Endothelial cell of umbilical vein (primary cell): ENCODE measurements at regions of chr12 and their contacts with region 1.

Region 1: GRCh38 chr12:69608114-69608513 is 2.6 kb downstream of the LRRC10 start:
- DNase-seq: no peak
- H3K4me3 ChIP-seq: no peak overlapping the region
- H3K27ac ChIP-seq: no peak overlapping the region
- H3K4me1 ChIP-seq: peaks cover 4% of the 10 kb centered on the region
- H3K27me3 ChIP-seq: peaks cover under 1 to 2% of the 10 kb centered on the region in 2 experiments
- CTCF ChIP-seq: no peak
- POLR2A ChIP-seq: no peak

Region 2: GRCh38 chr12:69623970-69624369 is 15.9 kb after region 1 on chr12:
- CTCF ChIA-PET with region 1: interaction called, 12 read pairs
- POLR2A ChIA-PET with region 1: no interaction called
- dilution Hi-C with region 1: no loop called
- intact Hi-C with region 1: no loop called
- DNase-seq: no peak
- H3K4me3 ChIP-seq: no peak overlapping the region
- H3K27ac ChIP-seq: no peak overlapping the region
- H3K4me1 ChIP-seq: no peaks in the 10 kb centered on the region
- H3K27me3 ChIP-seq: peaks cover 2% of the 10 kb centered on the region in 2 experiments
- CTCF ChIP-seq: no peak
- POLR2A ChIP-seq: no peak

Region 3: DNA sequence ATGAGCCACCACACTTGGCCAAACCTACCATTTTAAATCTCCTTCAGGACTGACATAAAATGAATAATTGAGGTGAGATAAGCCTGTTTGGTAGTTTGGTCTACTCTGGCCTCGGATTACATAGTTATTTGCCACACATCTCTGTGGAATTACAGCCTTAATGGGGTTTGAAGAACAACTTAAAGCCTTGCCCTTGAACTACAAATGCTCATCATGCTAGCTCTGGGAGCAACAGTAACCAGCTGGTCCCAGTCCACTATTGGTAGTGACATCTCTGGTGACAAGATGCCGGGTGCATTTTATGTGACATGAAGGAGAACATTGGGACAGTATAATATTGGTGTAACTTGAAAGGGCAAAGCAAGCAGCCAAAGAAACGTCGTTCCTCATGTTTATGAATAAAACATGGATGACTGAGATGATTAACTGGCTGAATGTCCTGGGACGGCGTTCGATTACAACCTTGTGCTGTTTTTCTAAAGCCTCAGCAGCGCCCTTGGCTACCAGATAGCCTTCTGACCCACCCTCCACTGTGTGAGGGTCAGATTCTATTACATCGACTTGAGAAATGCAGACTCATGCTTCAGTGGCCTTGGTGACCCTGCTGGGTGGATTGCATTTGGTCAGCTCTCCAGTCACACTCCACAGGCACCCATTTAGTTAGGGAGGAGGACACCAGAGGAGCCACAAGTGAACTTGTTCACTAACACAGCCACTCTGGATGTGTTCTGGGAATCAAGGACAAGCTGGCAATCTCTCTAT is 49.4 kb after region 1 on chr12:
- CTCF ChIA-PET with region 1: no interaction called
- POLR2A ChIA-PET with region 1: no interaction called
- dilution Hi-C with region 1: no loop called
- intact Hi-C with region 1: no loop called
- DNase-seq: no peak
- H3K4me3 ChIP-seq: no peak overlapping the region
- H3K27ac ChIP-seq: no peak overlapping the region
- H3K4me1 ChIP-seq: no peaks in the 10 kb centered on the region
- H3K27me3 ChIP-seq: peaks cover 2 to 7% of the 10 kb centered on the region in 2 experiments
- CTCF ChIP-seq: no peak
- POLR2A ChIP-seq: no peak